Caco-2 (cell line): ENCODE measurements at regions of chr2 and their contacts with region 1.

Region 1: GRCh38 chr2:148509288-148509902 is 135.2 kb upstream of the EPC2 start:
- DNase-seq: peak; percentile 90 to 91
- H3K4me3 ChIP-seq: peak overlapping the region; percentile 38
- H3K4me3 Mint-ChIP-seq: peak overlapping the region; percentile 78
- H3K27ac Mint-ChIP-seq: peak overlapping the region; percentile 18
- H3K4me1 ChIP-seq: no peaks in the 10 kb centered on the region
- H3K4me1 Mint-ChIP-seq: no peaks in the 10 kb centered on the region
- H3K27me3 ChIP-seq: no peaks in the 10 kb centered on the region
- H3K27me3 Mint-ChIP-seq: peaks cover 6% of the 10 kb centered on the region
- CTCF ChIP-seq: peak; percentile 92 to 97

Region 2: DNA sequence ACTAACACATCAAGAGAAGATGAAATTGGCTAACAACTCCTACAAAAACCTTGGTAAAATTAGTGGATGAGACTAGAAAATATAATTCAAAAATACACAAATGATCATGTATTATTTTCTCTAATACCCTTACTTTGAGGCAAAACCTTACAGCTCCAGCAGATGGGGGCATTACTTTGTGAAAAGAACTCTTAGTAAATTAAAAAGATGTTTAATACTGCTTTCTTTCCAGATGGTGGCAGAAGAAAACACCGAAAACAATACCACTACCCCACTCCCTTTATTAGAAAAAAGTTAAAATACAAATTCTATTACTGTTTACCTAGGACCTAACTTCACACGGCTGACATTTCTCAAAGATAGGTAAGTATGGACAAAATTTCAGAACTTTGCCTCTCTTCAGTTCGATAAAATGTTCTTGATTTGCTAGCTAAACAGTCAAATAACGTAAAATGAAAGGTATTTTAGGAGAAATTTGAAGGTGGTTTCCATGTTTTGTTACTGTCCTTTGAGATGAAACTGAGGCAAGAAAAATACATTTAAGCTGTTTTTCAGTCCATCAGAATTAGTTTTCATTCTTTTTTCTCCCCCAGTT is 519.5 kb before region 1 on chr2:
- CTCF ChIA-PET with region 1: interaction called, 7 read pairs
- POLR2A ChIA-PET with region 1: no interaction called
- intact Hi-C with region 1: loop called (anchors 1 kb)
- DNase-seq: peak in 1 of 2 experiments; percentile 24
- H3K4me3 ChIP-seq: no peak overlapping the region
- H3K4me3 Mint-ChIP-seq: no peak overlapping the region
- H3K27ac Mint-ChIP-seq: no peak overlapping the region
- H3K4me1 ChIP-seq: 0 out of 2 replicates have a peak, but pooled peaks cover 9% of the 10 kb centered on the region
- H3K4me1 Mint-ChIP-seq: no peaks in the 10 kb centered on the region
- H3K27me3 ChIP-seq: no peaks in the 10 kb centered on the region
- H3K27me3 Mint-ChIP-seq: no peaks in the 10 kb centered on the region
- CTCF ChIP-seq: peak; percentile 46 to 58

Region 3: DNA sequence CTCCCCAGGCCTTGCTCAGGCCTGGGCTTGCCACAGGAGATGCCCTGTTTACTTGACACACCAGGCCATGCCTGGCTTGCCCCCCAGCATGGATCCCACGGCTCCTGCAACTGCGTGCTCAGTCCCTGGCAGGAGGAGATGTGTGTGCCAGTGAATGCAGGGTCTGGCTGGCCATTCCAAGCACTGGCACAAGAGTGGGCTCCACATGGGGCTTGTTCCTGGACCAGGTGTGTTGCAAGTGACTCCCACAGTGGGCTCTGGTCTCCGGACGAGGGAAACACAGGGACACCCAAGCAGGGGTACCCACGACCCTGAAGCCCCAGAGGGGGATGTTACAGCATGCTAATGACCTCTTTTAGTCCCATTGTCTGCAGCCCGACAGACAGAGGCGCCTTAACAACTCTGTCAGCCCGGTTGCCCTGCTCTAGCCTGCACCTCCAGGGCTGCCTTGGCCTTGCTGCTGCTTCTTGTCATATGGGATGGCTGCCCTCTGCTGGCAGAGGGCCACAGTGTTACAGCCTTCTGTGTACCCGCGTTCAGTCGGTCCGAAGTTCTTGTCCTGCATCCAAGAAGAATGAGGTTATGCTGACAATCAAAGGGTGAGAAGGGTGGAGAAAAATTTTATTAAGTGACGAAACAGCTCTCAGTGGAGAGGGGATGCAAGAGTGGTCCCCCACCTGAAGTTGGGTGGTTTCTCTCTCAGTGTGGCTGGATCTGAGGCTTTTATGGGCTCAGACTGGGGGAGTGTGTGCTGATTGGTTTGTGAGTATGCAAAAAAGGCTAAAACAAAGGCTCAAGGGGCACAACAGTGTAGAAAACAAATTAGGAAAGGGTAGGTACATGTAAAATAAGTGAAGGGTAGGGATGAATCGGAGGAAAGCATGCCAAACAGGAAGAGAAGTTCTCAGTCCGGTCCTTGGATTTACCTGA is 308.1 kb before region 1 on chr2:
- CTCF ChIA-PET with region 1: no interaction called
- POLR2A ChIA-PET with region 1: no interaction called
- intact Hi-C with region 1: loop called (anchors 10 kb)
- DNase-seq: peak; percentile 43 to 57
- H3K4me3 ChIP-seq: no peak overlapping the region
- H3K4me3 Mint-ChIP-seq: no peak overlapping the region
- H3K27ac Mint-ChIP-seq: no peak overlapping the region
- H3K4me1 ChIP-seq: no peaks in the 10 kb centered on the region
- H3K4me1 Mint-ChIP-seq: peaks cover 2% of the 10 kb centered on the region
- H3K27me3 ChIP-seq: no peaks in the 10 kb centered on the region
- H3K27me3 Mint-ChIP-seq: no peaks in the 10 kb centered on the region
- CTCF ChIP-seq: peak; percentile 31

Region 4: DNA sequence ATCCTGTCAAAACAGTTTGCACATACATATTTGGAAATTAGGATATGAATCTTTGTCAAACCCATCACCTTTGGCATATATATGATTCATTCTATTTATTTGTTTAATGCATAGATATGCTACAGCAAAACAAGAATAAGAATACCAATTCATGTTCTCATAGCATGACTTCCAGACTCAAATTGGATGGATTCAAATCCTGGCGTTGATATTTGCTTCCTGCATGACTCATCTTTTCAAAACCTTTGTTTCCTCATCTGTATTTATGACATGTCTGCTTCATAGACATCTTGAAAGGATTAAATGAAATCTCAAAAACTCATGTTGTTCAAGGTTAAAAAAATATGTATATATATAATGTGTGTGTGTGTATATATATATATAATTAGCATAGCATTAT is 227.2 kb before region 1 on chr2:
- CTCF ChIA-PET with region 1: no interaction called
- POLR2A ChIA-PET with region 1: no interaction called
- intact Hi-C with region 1: loop called (anchors 5 kb)
- DNase-seq: no peak
- H3K4me3 ChIP-seq: no peak overlapping the region
- H3K4me3 Mint-ChIP-seq: no peak overlapping the region
- H3K27ac Mint-ChIP-seq: no peak overlapping the region
- H3K4me1 ChIP-seq: 0 out of 2 replicates have a peak, but pooled peaks cover 6% of the 10 kb centered on the region
- H3K4me1 Mint-ChIP-seq: peaks cover 19% of the 10 kb centered on the region
- H3K27me3 ChIP-seq: no peaks in the 10 kb centered on the region
- H3K27me3 Mint-ChIP-seq: no peaks in the 10 kb centered on the region
- CTCF ChIP-seq: no peak

Region 5: DNA sequence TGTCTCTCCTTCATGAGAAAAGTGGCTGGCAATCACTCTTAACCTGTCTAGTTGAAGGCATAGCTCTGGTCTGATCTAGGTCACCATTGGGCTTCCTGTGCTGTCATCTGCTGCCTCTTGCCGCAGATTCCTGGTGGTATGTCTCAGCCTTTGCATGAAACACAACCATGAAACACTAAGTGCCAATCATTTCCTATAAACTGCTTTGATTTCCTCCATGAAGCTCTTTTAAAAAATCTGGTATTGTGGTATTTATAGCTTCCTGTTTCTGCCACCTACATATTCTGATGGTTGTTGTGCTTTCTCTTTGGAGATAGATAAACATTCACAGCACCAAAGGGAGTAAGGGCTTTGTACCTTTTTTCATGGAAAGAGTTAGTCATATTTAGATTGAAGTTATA is 15.1 kb after region 1 on chr2:
- CTCF ChIA-PET with region 1: no interaction called
- POLR2A ChIA-PET with region 1: no interaction called
- intact Hi-C with region 1: no loop called
- DNase-seq: no peak
- H3K4me3 ChIP-seq: no peak overlapping the region
- H3K4me3 Mint-ChIP-seq: no peak overlapping the region
- H3K27ac Mint-ChIP-seq: no peak overlapping the region
- H3K4me1 ChIP-seq: no peaks in the 10 kb centered on the region
- H3K4me1 Mint-ChIP-seq: no peaks in the 10 kb centered on the region
- H3K27me3 ChIP-seq: no peaks in the 10 kb centered on the region
- H3K27me3 Mint-ChIP-seq: peaks cover 3% of the 10 kb centered on the region
- CTCF ChIP-seq: no peak